ENCODE measurements at regions of chr1 and their contacts with region 1.

Region 1: GRCh38 chr1:115112496-115113375 is 23.4 kb upstream of the TSPAN2 start:
- DNase-seq: no peak
- H3K4me3 ChIP-seq: no peak overlapping the region
- H3K27ac ChIP-seq: no peak overlapping the region
- H3K4me1 ChIP-seq: peaks cover 2% of the 10 kb centered on the region
- H3K27me3 ChIP-seq: peaks cover 4% of the 10 kb centered on the region
- CTCF ChIP-seq: peak; percentile 96

Region 2: GRCh38 chr1:114982251-114982650 is 130.5 kb before region 1 on chr1:
- intact Hi-C with region 1: loop called (anchors 5 kb)
- DNase-seq: no peak
- H3K4me3 ChIP-seq: no peak overlapping the region
- H3K27ac ChIP-seq: no peak overlapping the region
- H3K4me1 ChIP-seq: no peaks in the 10 kb centered on the region
- H3K27me3 ChIP-seq: peaks cover 14% of the 10 kb centered on the region
- CTCF ChIP-seq: no peak

Region 3: GRCh38 chr1:115052454-115053083 is 60.2 kb before region 1 on chr1:
- intact Hi-C with region 1: loop called (anchors 10 kb)
- DNase-seq: peak; percentile 29
- H3K4me3 ChIP-seq: no peak overlapping the region
- H3K27ac ChIP-seq: no peak overlapping the region
- H3K4me1 ChIP-seq: no peaks in the 10 kb centered on the region
- H3K27me3 ChIP-seq: no peaks in the 10 kb centered on the region
- CTCF ChIP-seq: peak; percentile 87